Astrocyte of the cerebellum (primary cell): ENCODE measurements at regions of chr3 and their contacts with region 1.

Region 1: DNA sequence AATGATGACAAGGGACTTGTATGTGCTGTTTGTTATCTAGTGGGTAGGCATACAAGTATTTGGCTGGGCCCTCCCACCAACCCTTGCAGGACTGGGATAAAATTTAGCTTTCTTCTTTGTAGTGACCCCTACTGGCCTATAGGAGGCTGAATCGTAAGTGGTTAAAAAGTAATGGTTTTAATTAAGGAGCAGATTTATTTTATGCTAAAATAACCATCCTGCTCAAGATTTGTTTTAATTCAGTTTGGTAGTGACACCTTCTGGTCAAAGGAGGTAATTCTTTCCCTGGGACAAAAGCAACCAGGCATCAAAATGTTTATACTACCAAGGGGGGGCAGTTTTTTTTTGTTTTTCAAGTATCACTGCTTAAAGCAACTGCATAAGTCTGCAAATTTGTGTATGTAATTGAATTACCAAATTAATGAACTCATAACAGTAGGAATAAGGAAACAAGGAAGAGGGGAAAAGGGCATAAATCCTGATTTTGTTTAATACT is 70.7 kb downstream of the TOP2B start:
- DNase-seq: peak; percentile 70
- H3K4me3 ChIP-seq: no peak overlapping the region
- CTCF ChIP-seq: peak; percentile 75

Region 2: GRCh38 chr3:24981924-24982323 is 612.1 kb before region 1 on chr3:
- in situ Hi-C with region 1: loop called (anchors 25 kb)
- DNase-seq: no peak
- H3K4me3 ChIP-seq: no peak overlapping the region
- CTCF ChIP-seq: no peak

Region 3: GRCh38 chr3:25527801-25528200 is 66.3 kb before region 1 on chr3:
- in situ Hi-C with region 1: no loop called
- DNase-seq: peak; percentile 56
- H3K4me3 ChIP-seq: no peak overlapping the region
- CTCF ChIP-seq: no peak